ENCODE measurements at regions of chr1 and their contacts with region 1.

Region 1: GRCh38 chr1:12113433-12114339 is 50.6 kb downstream of the TNFRSF8 start:
- DNase-seq: peak in 1 of 2 donors; percentile 49
- H3K4me3 ChIP-seq: no peak overlapping the region
- H3K27ac ChIP-seq: no peak overlapping the region
- H3K4me1 ChIP-seq: no peaks in the 10 kb centered on the region
- H3K27me3 ChIP-seq: no peaks in the 10 kb centered on the region
- CTCF ChIP-seq: no peak
- EP300 ChIP-seq: no peak
- POLR2A ChIP-seq: no peak

Region 2: GRCh38 chr1:12658531-12659453 is 545.1 kb after region 1 on chr1:
- intact Hi-C with region 1: loop called (anchors 10 kb)
- DNase-seq: peak; percentile 82 to 92
- H3K4me3 ChIP-seq: no peak overlapping the region
- H3K27ac ChIP-seq: no peak overlapping the region
- H3K4me1 ChIP-seq: peaks cover 0 to 9% (median 7%) of the 10 kb centered on the region in 4 donors
- H3K27me3 ChIP-seq: no peaks in the 10 kb centered on the region
- CTCF ChIP-seq: peak in 6 of 7 experiments; percentile 58 to 98 (median 94)
- EP300 ChIP-seq: no peak
- POLR2A ChIP-seq: no peak

Region 3: DNA sequence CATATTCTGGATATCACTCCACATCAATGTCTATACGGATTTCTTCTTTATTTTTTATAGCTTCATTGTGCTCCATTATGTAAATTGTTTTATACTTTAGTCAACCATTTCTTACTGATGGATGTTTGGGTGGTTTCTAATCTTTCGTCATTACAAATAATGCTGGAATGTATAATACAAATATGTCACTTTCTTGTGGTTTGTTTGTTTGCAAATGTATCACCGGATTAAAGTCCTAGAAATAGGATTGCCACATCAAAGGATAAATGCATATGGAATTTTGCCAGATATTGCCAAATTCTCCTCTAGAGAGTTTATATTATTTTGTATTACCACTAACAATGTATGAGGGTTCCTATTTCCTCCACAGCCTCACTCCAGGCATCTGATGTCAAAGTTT is 1537.6 kb after region 1 on chr1:
- intact Hi-C with region 1: no loop called
- DNase-seq: no peak
- H3K4me3 ChIP-seq: no peak overlapping the region
- H3K27ac ChIP-seq: no peak overlapping the region
- H3K4me1 ChIP-seq: no peaks in the 10 kb centered on the region
- H3K27me3 ChIP-seq: no peaks in the 10 kb centered on the region
- CTCF ChIP-seq: no peak
- EP300 ChIP-seq: no peak
- POLR2A ChIP-seq: no peak

Measured in stomach (tissue), 19 donors.